Calu3 (cell line): ENCODE measurements at regions of chr2 and their contacts with region 1.

Region 1: DNA sequence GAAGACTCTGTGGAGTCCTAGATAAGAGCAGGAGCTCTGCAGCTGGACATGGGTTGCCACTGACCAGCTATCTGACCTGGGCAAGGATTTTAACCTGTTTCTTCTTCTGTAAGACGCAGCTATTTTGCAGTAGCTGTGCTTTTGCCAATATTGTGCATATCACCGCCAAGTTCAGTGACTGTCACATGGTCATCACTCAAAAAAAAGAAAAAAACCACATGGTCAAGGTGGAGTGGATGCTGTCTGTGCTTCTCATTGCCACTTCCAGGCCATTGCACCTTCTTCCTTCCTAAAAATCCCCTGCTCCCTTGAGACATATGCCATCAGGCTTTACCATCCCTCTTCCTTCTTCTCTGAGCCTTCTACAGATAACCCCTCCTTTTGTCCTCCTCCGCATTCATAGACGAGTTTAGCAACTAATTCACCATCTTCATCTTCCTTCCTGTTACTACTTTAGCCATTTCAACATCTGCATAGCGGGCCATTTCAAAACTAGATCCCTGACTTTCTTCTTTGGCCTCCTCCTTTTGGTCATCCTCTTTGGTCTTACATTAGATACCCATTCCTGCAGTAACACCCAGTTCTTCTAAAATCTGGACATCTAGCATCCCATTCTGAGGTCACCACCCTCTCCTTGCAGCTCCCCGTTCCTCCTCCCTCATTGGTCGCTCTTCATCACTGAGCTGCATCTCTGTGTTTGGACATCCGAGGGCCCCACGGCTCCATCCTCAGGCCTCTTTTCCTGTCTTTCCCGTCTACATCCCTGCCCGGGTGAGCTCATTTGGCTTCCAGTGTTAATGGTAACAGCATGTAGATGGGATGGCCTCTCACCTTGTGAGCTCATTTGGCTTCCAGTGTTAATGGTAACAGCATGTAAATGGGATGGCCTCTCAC is 17.8 kb downstream of the RNF144A start:
- DNase-seq: no peak
- H3K4me3 Mint-ChIP-seq: no peak overlapping the region
- H3K27ac Mint-ChIP-seq: no peak overlapping the region
- H3K4me1 Mint-ChIP-seq: peaks cover 14% of the 10 kb centered on the region
- H3K27me3 Mint-ChIP-seq: no peaks in the 10 kb centered on the region
- CTCF ChIP-seq: no peak

Region 2: DNA sequence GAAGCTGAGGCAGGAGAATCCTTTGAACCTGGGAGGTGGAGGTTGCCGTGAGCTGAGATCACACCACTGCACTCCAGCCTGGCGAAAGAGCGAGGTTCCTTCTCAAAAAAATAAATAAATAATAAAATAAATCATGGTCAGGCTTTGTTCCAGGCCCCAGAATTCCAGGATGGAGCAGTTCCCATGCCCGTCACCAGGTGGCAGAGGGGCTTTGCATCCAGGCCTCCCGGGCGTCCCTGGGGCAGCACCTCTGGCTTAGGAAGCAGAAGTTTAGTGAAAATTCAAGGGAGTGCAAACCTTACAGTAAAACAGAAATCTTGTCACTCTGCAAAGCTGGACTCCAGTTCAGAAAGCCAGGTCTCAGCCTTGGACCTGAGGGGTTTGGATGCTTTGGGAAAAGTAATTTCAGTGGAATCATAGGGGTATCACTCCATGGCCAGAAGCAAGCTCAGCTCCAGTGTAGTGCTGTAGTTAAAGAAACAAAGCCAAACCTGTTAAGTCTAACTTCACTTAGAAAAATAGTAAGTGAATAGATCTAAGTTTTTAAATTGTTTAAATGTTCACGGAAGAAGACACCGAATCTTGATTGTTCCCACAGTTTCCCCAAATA is 582.0 kb before region 1 on chr2:
- CTCF ChIA-PET with region 1: no interaction called
- intact Hi-C with region 1: no loop called
- DNase-seq: peak; percentile 77
- H3K4me3 Mint-ChIP-seq: no peak overlapping the region
- H3K27ac Mint-ChIP-seq: no peak overlapping the region
- H3K4me1 Mint-ChIP-seq: no peaks in the 10 kb centered on the region
- H3K27me3 Mint-ChIP-seq: no peaks in the 10 kb centered on the region
- CTCF ChIP-seq: peak; percentile 51

Region 3: DNA sequence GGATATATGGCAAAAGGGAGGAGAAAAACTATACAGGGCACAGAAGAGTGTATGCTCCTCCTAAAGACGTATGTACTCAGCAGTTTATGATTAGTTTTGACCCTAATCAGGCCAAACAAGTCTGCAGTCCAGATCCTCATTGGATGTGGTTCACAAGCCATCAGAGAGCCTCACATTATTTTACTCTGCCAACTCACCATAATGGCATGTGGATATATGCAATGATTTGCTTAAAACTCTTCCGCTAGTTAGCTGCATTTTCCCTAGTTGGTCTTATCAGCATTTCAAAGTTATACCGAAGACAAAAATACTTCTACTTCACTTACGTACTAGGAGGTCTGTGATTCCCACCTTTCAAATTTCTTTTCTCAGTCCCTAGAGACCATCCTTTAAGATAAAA is 267.7 kb before region 1 on chr2:
- CTCF ChIA-PET with region 1: no interaction called
- intact Hi-C with region 1: no loop called
- DNase-seq: no peak
- H3K4me3 Mint-ChIP-seq: no peak overlapping the region
- H3K27ac Mint-ChIP-seq: no peak overlapping the region
- H3K4me1 Mint-ChIP-seq: no peaks in the 10 kb centered on the region
- H3K27me3 Mint-ChIP-seq: no peaks in the 10 kb centered on the region
- CTCF ChIP-seq: no peak

Region 4: DNA sequence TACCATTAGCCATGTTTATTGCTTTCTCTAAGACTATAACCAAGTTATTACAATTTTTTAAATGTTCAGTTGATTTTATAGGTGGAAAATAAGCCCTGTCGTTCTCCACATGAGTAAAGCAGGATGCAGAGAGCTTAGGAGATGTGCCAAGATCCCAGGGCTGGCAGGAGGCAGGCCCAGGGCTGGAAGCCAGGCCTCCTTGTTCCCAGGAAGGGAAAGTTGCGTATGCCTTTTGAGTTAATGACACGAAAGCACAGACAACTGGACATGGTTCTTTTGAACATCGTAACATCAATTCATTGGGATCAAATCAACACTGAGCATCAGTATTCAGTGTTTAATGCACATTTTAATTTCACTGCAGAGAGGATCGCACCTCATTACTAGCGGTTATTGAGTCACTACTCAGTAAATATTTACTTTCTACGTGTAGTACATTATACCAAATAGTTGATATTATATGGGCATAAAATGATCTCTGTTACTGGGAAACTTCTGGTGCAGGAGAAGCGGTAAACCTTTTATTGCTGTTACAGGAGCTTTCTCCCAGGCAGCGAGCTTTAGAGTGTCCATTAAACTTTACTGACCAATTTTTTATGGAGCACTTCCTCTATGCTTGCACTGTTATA is 42.2 kb after region 1 on chr2:
- CTCF ChIA-PET with region 1: no interaction called
- intact Hi-C with region 1: loop called (anchors 5 kb)
- DNase-seq: no peak
- H3K4me3 Mint-ChIP-seq: no peak overlapping the region
- H3K27ac Mint-ChIP-seq: no peak overlapping the region
- H3K4me1 Mint-ChIP-seq: peaks cover 34% of the 10 kb centered on the region
- H3K27me3 Mint-ChIP-seq: no peaks in the 10 kb centered on the region
- CTCF ChIP-seq: no peak